SK-N-SH (cell line): ENCODE measurements at regions of chr5 and their contacts with region 1.

Region 1: DNA sequence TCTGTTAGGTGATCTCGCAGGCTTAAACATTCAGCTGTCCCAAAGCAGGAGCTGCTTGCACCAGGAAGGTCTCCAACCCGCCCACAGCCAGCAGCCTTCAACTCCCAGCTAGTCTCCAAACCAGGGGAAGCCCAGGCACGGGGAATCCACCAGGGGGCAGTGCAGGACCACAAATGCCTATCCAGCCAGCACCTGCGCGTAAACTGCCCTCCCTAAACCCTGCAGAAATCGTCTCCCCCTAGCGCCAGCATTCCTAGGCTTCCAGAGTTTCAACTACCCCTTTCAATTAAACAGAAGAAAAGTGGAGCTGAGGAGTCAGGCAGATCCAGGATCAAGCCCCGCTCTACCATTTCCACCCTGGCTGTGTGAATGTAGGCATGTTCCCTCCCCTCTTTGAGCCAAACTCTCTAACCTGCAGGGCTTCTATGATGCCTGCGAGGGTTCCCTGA is 72.0 kb downstream of the HRH2 start:
- DNase-seq: peak; percentile 92
- H3K4me3 ChIP-seq: peak overlapping the region; percentile 23 to 39; a peak in 2 of 4 replicates
- H3K27ac ChIP-seq: no peak overlapping the region
- H3K4me1 ChIP-seq: peaks cover 0 to 8% of the 10 kb centered on the region in 2 experiments; a peak in 1 of 4 replicates
- H3K27me3 ChIP-seq: no peaks in the 10 kb centered on the region
- CTCF ChIP-seq: peak; percentile 97
- EP300 ChIP-seq: no peak
- RAD21 ChIP-seq: peak; percentile 99

Region 2: GRCh38 chr5:175534070-175534932 is 195.6 kb before region 1 on chr5:
- CTCF ChIA-PET with region 1: interaction called, 235 read pairs
- POLR2A ChIA-PET with region 1: interaction called, 3 read pairs
- DNase-seq: peak; percentile 90
- H3K4me3 ChIP-seq: peak overlapping the region; percentile 17 to 46; a peak in 2 of 4 replicates
- H3K27ac ChIP-seq: no peak overlapping the region; a peak in 1 of 4 replicates
- H3K4me1 ChIP-seq: peaks cover 0 to 15% of the 10 kb centered on the region in 2 experiments; a peak in 2 of 4 replicates
- H3K27me3 ChIP-seq: no peaks in the 10 kb centered on the region
- CTCF ChIP-seq: peak; percentile 85
- EP300 ChIP-seq: no peak
- RAD21 ChIP-seq: peak; percentile 97

Region 3: DNA sequence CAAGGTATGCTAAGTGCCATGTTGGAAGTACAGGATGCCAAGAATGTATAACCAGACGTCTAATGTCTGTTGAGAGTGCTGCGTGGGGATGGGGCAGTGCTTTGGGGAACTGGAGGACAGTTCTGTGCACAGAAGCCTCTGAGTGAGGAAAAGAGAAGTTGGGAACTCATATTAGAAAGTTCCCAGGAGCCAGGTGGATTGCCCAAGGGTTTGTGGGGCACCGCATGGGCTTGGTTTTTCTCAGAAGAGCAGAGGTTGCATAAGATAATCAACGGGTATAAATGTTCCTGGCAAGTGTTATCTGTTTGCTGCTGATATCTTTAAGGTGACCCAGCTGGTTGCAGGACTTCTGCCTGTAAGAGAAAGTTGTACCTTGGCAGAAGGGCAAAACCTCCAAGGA is 58.8 kb before region 1 on chr5:
- CTCF ChIA-PET with region 1: no interaction called
- POLR2A ChIA-PET with region 1: no interaction called
- DNase-seq: no peak
- H3K4me3 ChIP-seq: no peak overlapping the region
- H3K27ac ChIP-seq: no peak overlapping the region
- H3K4me1 ChIP-seq: no peaks in the 10 kb centered on the region
- H3K27me3 ChIP-seq: no peaks in the 10 kb centered on the region
- CTCF ChIP-seq: no peak
- EP300 ChIP-seq: no peak
- RAD21 ChIP-seq: no peak

Region 4: GRCh38 chr5:175718401-175719108 is 11.3 kb before region 1 on chr5:
- CTCF ChIA-PET with region 1: interaction called, 68 read pairs
- POLR2A ChIA-PET with region 1: no interaction called
- DNase-seq: no peak
- H3K4me3 ChIP-seq: no peak overlapping the region
- H3K27ac ChIP-seq: no peak overlapping the region
- H3K4me1 ChIP-seq: no peaks in the 10 kb centered on the region; a peak in 1 of 4 replicates
- H3K27me3 ChIP-seq: no peaks in the 10 kb centered on the region
- CTCF ChIP-seq: peak; percentile 51
- EP300 ChIP-seq: no peak
- RAD21 ChIP-seq: peak; percentile 65

Region 5: GRCh38 chr5:175773534-175774070 is 43.7 kb after region 1 on chr5:
- CTCF ChIA-PET with region 1: interaction called, 20 read pairs
- POLR2A ChIA-PET with region 1: no interaction called
- DNase-seq: no peak
- H3K4me3 ChIP-seq: no peak overlapping the region
- H3K27ac ChIP-seq: no peak overlapping the region
- H3K4me1 ChIP-seq: no peaks in the 10 kb centered on the region; a peak in 1 of 4 replicates
- H3K27me3 ChIP-seq: no peaks in the 10 kb centered on the region
- CTCF ChIP-seq: no peak
- EP300 ChIP-seq: no peak
- RAD21 ChIP-seq: no peak

Region 6: DNA sequence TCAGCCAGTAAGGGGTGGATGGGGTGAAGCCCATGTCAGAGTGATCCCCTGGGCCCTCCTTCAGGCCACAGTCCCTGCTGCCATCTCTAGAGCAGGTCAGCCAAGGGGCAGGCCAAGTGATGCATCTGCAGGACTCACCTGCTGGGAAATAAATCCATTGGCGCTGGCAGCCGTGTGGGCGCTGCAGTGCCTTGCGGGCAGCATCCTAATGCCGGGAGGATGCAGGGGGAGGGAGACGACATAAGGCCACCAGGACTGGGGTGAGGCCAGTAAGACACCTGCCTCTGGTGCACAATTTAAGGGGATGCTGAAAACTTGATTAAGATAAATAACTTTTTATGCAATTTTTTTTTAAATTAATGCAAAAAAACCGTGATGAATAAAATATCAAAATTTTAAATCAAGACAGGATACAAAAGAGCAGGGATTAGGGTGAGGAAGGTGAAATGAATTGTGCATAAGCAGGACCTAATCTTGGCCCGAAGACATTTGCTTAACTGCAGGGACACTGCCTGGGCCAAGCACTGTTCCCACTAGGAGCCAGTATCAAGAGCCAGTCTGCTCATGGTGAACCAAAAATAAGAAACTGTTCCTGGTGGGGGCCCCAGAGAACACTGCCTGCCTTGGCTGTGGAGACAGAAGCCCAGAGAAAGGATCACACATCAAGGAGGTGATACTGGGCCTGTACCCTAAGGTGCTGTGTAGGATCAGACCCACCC is 74.0 kb after region 1 on chr5:
- CTCF ChIA-PET with region 1: interaction called, 40 read pairs
- POLR2A ChIA-PET with region 1: no interaction called
- DNase-seq: no peak
- H3K4me3 ChIP-seq: no peak overlapping the region
- H3K27ac ChIP-seq: no peak overlapping the region
- H3K4me1 ChIP-seq: peaks cover 0 to 17% of the 10 kb centered on the region in 2 experiments; a peak in 1 of 4 replicates
- H3K27me3 ChIP-seq: no peaks in the 10 kb centered on the region; the same call in 1 of the 2 replicates
- CTCF ChIP-seq: no peak
- EP300 ChIP-seq: no peak
- RAD21 ChIP-seq: no peak

Region 7: DNA sequence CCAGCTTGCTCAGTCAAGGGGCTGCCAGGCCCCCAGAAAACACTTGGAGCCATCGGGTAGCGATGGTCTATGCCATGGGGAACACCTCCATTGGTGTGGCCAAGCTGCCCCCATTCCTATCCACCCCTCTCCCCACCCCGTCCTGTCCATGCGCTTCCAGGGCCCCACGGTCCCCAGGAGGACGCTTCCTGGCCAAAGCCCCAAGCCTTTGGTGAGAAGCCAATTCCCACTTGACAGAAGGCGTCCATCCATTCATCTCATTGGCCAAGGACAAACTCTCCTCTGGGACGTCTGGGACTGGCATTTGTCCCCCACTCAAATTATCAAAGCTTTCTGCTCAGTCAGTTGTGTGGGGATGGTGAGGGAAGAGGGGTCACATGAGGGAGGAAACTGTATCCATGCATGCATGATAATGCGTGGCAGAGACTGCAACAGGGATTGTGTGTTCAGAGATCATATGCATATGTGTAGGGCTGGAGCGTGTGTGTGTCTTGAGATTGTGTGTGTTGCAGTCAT is 151.0 kb after region 1 on chr5:
- CTCF ChIA-PET with region 1: interaction called, 338 read pairs
- POLR2A ChIA-PET with region 1: no interaction called
- DNase-seq: no peak
- H3K4me3 ChIP-seq: no peak overlapping the region
- H3K27ac ChIP-seq: no peak overlapping the region
- H3K4me1 ChIP-seq: no peaks in the 10 kb centered on the region
- H3K27me3 ChIP-seq: no peaks in the 10 kb centered on the region
- CTCF ChIP-seq: no peak
- EP300 ChIP-seq: no peak
- RAD21 ChIP-seq: no peak